ENCODE measurements at regions of chr19 and their contacts with region 1.

Region 1: DNA sequence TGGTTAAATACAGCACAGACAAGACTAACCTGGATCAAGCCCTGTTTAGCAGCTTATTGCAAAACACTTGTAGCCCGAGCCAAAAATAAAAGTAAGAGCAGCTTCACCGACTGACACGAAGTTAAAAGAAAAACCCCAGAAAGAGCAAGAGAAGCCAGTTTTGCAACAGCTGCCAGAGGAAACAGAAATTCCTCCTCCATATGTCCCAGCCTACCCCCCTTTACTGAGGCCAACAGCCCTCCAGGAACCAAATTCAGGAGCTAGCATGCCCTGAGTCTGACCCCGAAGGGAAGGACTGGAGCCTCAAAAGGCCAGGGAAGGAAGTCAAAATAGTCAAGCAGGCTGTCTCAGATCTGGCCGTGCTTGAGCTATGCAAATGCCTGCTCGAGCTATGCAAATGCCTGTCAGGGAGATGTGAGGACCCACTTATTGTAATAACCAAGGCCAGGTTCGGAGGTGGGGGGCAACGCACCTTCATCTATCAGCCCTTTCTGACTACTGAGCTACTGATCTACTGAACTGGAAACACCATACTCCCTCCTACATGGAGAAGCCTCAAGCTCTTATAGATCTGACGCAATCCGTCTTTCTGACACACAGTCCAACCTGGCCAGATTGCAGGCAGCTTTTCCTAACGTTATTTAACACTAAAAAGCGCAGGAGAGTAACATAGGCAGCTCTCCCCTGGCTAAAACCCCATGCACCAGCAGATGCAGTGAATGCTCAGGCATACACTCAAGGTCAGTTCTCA is 6.7 kb downstream of the SIGLEC11 start:
- DNase-seq: no peak
- H3K4me3 Mint-ChIP-seq: no peak overlapping the region
- H3K27ac Mint-ChIP-seq: no peak overlapping the region
- H3K4me1 Mint-ChIP-seq: peaks cover 3% of the 10 kb centered on the region
- H3K27me3 Mint-ChIP-seq: peaks cover 17% of the 10 kb centered on the region

Region 2: DNA sequence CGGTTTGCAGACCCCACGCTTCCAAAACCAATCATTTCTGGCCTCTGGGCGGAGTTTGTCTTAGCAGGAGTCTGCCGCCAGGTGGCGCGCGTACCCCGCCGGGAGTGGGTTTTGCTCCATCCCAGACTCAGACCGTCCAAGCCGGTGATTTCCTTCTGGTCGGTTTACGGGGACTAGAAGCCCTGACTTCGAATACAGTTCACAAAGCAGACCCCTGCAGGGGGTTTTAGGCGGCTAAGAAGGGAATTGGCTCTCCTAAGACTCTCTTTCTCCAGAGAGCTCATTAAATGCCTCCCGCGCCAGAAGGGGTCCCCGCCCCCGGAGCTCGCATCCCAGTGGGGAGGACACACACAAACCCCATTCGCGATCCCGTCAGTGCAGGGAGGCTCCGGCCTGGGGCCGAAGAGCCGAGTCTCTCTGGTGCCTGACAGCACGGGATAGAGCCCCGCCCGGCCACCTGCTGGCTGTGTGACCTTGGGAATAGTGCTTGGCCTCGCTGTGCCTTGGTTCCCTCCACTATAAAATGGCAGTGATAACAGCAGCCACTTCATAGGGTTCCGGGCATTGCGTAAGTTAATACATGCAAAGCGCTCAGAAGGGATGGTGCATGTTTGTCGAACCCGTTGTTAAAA is 16.4 kb before region 1 on chr19:
- CTCF ChIA-PET with region 1: interaction called, 48 read pairs
- POLR2A ChIA-PET with region 1: no interaction called
- intact Hi-C with region 1: no loop called
- DNase-seq: peak; percentile 86
- H3K4me3 Mint-ChIP-seq: no peak overlapping the region
- H3K27ac Mint-ChIP-seq: no peak overlapping the region
- H3K4me1 Mint-ChIP-seq: peaks cover 10% of the 10 kb centered on the region
- H3K27me3 Mint-ChIP-seq: peaks cover 13% of the 10 kb centered on the region

Region 3: DNA sequence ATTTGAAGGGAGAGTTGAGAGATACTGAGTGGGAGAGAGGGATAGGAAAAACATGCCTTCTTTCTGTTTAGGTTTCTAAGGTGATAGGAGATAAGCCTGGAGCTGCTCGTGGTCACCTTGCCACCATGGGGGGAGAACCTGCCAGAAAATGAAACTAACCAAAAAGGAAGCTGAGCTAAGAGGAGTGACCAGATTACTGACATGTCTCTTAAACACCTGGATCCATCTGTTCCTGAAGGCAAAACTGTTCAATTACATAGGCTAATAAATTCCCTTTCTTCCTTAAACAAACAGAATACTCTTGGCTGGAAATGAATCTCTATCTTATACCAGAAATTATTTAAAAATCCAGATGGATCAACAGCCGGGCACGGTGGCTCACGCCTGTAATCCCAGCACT is 98.9 kb after region 1 on chr19:
- CTCF ChIA-PET with region 1: no interaction called
- POLR2A ChIA-PET with region 1: no interaction called
- intact Hi-C with region 1: no loop called
- DNase-seq: no peak
- H3K4me3 Mint-ChIP-seq: no peak overlapping the region
- H3K27ac Mint-ChIP-seq: no peak overlapping the region
- H3K4me1 Mint-ChIP-seq: peaks cover 17% of the 10 kb centered on the region
- H3K27me3 Mint-ChIP-seq: no peaks in the 10 kb centered on the region

Region 4: GRCh38 chr19:50794439-50795237 is 840.4 kb after region 1 on chr19:
- CTCF ChIA-PET with region 1: no interaction called
- POLR2A ChIA-PET with region 1: no interaction called
- intact Hi-C with region 1: no loop called
- DNase-seq: peak; percentile 60
- H3K4me3 Mint-ChIP-seq: peak overlapping the region; percentile 12
- H3K27ac Mint-ChIP-seq: peak overlapping the region; percentile 49
- H3K4me1 Mint-ChIP-seq: peaks cover 9% of the 10 kb centered on the region
- H3K27me3 Mint-ChIP-seq: no peaks in the 10 kb centered on the region